Activated CD4-positive, alpha-beta T cell treated with anti-CD3 and anti-CD28 coated beads for 36 hours (primary cell): ENCODE measurements at regions of chr14 and their contacts with region 1.

Region 1: DNA sequence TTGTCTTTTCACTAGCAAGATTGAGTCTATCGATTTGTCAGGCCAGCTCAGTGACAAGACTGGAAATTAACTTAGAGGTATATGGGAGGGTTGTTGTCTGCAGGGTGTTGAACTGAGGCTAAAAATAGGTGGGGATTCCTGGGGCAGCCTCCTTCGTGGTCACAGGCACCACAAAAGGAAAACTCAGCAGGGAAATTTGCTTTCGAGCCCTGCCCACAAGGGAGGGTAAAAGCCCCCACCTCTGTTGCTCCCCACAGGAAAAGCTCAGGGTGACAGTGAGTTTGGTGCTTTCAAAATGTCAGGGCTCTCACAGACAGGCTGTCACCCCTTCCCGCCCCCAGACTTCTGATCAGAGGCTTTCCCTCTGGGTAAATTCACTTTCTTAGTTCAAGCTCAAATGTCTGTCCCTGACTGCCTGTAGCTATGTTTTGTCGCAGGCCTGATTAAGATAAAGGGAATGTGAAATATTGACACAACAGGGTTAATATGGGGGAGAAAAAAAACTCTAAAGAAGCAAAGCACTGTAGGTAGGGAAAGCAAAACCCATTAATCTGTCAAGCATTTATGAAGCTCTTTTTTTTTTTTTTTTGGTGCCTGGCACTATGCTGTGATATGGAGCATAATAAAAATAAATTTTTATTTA is 11.7 kb upstream of the NFKBIA start:
- DNase-seq: peak; percentile 86
- ATAC-seq: peak; percentile 75
- H3K4me3 Mint-ChIP-seq: peak overlapping the region; percentile 60
- H3K27ac Mint-ChIP-seq: peak overlapping the region; percentile 94
- H3K4me1 Mint-ChIP-seq: peaks cover 53% of the 10 kb centered on the region
- H3K27me3 Mint-ChIP-seq: no peaks in the 10 kb centered on the region

Region 2: GRCh38 chr14:34629657-34630529 is 786.3 kb before region 1 on chr14 and contains the start of gene SNX6:
- CTCF ChIA-PET with region 1: no interaction called
- POLR2A ChIA-PET with region 1: no interaction called
- intact Hi-C with region 1: loop called in 1 of 2 experiments (anchors 5 kb)
- DNase-seq: peak; percentile 93
- ATAC-seq: peak; percentile 98
- H3K4me3 Mint-ChIP-seq: peak within 1 kb of the TSS; percentile 97
- H3K27ac Mint-ChIP-seq: peak within 1 kb of the TSS; percentile 98
- H3K4me1 Mint-ChIP-seq: peaks cover 25% of the 10 kb centered on the region
- H3K27me3 Mint-ChIP-seq: no peaks in the 10 kb centered on the region
- total RNA-seq, gene SNX6: 77.3 to 78.7 TPM

Region 3: DNA sequence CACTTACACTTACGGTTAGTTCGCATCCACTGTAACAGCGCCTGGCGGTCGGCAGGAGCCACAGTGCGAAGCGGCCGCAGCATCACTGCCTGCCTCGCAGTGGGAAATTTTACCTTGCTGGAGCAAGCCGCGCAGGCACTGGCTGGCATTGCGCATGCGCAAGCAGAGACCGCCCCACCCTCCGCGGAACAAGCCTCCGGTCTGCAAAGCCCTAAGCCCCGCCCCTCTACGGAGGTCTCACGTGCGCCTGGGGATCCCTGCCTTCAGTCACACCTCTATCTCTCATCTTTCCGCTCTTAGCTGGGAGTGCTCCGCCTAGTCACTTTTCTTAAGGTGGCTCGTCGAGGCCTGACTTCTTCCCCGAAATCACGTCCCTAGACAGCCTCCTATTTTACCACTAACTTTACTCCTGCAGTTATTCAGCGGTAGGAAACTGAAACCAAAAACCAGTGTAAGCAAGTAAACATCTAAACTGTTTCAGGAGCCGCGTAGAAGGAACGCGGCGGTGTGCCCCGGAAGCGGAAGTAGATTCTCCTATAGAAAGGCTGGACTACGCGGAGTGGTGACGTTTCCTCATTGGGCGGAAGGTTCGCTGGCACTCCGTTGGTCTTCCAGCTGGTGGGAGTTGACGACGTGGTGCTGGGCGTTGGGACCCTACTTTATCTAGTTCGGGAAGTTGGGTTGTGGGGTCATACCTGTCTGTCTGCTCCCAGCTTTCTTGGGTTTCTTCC is 433.6 kb before region 1 on chr14 and contains the start of gene SRP54:
- CTCF ChIA-PET with region 1: no interaction called
- POLR2A ChIA-PET with region 1: interaction called, 4 read pairs
- intact Hi-C with region 1: loop called (anchors 1 to 5 kb)
- DNase-seq: peak; percentile 100
- ATAC-seq: peak; percentile 91
- H3K4me3 Mint-ChIP-seq: no peak within 1 kb of the TSS
- H3K27ac Mint-ChIP-seq: no peak within 1 kb of the TSS
- H3K4me1 Mint-ChIP-seq: peaks cover 16% of the 10 kb centered on the region
- H3K27me3 Mint-ChIP-seq: no peaks in the 10 kb centered on the region
- total RNA-seq, gene SRP54: 81.1 to 88.4 TPM

Region 4: GRCh38 chr14:35140718-35141581 is 275.3 kb before region 1 on chr14:
- CTCF ChIA-PET with region 1: interaction called, 260 read pairs
- POLR2A ChIA-PET with region 1: interaction called, 7 read pairs
- intact Hi-C with region 1: loop called (anchors 1 kb)
- DNase-seq: no peak
- ATAC-seq: no peak
- H3K4me3 Mint-ChIP-seq: no peak overlapping the region
- H3K27ac Mint-ChIP-seq: no peak overlapping the region
- H3K4me1 Mint-ChIP-seq: peaks cover 14% of the 10 kb centered on the region
- H3K27me3 Mint-ChIP-seq: no peaks in the 10 kb centered on the region

Region 5: DNA sequence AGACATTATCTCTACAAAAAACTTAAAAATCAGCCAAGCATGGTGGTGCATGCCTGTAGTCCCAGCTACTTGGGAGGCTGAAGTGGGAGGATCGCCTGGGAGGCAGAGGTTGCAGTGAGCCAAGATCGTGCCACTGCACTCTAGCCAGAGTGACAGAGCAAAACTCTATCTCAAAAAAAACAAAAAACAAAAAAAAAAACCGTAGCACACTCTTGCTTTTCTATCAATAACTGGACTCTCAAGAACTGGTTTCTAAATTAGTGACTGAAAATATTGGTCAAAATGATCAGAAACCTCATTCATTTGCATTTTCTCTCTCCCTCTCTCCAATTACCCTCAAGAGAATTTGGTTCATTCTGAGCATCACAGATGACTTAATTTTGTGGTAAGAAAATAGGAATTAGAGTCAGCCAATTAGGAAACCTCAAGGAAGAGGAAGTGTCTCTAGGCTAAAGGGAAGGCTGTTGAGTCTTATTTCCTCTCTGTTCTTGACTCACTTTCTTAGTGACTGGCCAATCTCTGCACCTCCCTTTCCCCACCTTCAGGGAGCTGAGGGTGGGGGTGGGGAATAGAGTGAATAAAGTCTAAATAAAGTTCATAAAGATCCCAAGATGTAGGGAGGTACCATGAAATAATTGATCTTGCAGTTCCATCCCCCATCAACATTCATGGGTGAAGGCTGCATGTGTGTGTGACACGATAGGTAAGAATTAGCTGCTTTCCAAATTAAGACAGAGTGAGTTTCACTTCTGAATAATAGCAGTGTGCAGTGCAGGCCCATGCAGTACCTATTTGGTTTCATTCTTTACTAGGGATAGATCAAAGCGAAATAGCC is 130.8 kb before region 1 on chr14:
- CTCF ChIA-PET with region 1: interaction called, 11 read pairs
- POLR2A ChIA-PET with region 1: interaction called, 16 read pairs
- intact Hi-C with region 1: loop called (anchors 1 kb)
- DNase-seq: peak; percentile 40
- ATAC-seq: peak; percentile 59
- H3K4me3 Mint-ChIP-seq: peak overlapping the region; percentile 24
- H3K27ac Mint-ChIP-seq: peak overlapping the region; percentile 97
- H3K4me1 Mint-ChIP-seq: peaks cover 56% of the 10 kb centered on the region
- H3K27me3 Mint-ChIP-seq: no peaks in the 10 kb centered on the region

Region 6: DNA sequence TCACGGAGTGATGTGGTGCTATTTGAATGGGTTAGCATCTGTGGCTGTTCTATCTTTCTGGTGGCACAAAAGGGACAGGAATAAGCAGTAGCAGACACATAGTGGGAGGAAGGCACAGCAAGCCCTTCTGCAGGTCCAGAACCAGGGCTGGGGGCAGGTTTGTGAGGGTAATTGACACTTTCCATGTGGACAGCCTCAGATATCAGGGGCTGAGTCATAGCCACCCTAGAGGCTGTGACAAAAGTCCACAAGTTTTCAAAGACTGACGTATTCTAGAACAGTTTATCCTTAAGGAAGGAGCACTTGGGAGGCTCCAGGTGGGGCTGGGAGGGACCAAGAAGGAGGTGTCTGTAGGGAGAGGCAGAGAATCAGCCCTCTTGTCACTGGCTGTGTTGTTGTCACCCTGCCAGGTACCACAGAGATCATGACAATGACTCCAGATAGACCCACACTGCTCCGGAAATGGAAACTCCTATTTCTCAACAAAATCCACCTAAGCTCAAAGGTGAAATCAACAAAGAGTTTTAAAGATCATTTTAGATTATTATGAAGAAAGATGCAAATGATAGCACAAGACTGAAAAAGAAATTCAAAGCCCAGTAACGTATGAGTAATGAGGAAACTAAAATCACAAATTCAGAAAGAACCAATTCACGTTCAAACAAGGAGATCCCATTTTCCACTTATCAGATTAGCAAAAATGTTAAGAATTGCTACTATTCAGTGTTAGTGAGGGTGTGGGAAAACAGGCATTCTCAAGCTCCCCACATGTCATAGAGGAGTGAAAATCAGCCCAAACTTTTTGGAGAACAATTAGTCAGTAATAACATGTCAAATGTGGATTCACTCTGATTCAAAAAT is 60.0 kb before region 1 on chr14:
- CTCF ChIA-PET with region 1: no interaction called
- POLR2A ChIA-PET with region 1: interaction called, 14 read pairs
- intact Hi-C with region 1: no loop called
- DNase-seq: peak; percentile 79
- ATAC-seq: peak; percentile 85
- H3K4me3 Mint-ChIP-seq: peak overlapping the region; percentile 30
- H3K27ac Mint-ChIP-seq: peak overlapping the region; percentile 91
- H3K4me1 Mint-ChIP-seq: peaks cover 46% of the 10 kb centered on the region
- H3K27me3 Mint-ChIP-seq: no peaks in the 10 kb centered on the region

Region 7: GRCh38 chr14:35808076-35808652 is 391.9 kb after region 1 on chr14:
- CTCF ChIA-PET with region 1: no interaction called
- POLR2A ChIA-PET with region 1: no interaction called
- intact Hi-C with region 1: loop called in 1 of 2 experiments (anchors 5 kb)
- DNase-seq: peak; percentile 54
- ATAC-seq: no peak
- H3K4me3 Mint-ChIP-seq: peak overlapping the region; percentile 95
- H3K27ac Mint-ChIP-seq: peak overlapping the region; percentile 97
- H3K4me1 Mint-ChIP-seq: peaks cover 24% of the 10 kb centered on the region
- H3K27me3 Mint-ChIP-seq: no peaks in the 10 kb centered on the region